Breast epithelium (tissue), 4 donors: ENCODE measurements at regions of chr2 and their contacts with region 1.

Region 1: GRCh38 chr2:105845976-105846375 is 101.3 kb downstream of the NCK2 start:
- DNase-seq: no peak
- H3K4me3 ChIP-seq: no peak overlapping the region
- H3K27ac ChIP-seq: no peak overlapping the region
- H3K4me1 ChIP-seq: no peaks in the 10 kb centered on the region
- H3K27me3 ChIP-seq: no peaks in the 10 kb centered on the region
- CTCF ChIP-seq: no peak
- POLR2A ChIP-seq: no peak

Region 2: DNA sequence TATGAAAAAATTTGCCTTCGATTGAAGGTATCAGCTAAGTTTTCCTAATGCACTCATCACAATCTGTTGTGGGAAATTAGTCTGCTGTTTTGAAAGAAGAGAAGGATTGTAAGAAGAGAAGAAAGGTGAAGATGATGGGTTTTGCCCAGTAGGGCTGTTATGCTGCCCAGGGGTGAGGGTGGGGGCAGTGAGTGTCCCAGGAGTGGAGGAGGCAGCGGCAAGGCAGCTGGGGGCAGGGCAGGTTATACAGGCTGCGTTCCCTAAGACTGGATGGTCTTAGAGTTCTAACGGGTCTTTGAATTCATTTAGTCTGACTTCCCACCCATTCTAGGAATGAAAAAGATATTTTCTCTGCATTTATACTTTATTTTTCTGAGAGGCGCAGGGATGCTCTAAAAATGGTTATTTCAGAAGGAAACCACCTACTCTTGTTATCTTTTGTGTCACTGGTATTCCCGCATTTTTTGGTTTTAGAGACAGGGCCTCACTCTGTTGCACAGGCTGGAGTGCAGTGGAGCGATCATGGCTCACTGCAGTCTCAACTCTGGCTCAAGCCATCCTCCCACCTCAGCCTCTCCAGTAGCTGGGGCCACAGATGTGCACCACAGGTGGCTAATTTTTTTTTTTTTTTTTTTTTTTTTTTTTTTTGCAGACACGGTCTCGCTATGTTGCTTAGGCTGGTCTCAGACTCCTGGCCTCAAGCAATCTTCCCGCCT is 34.5 kb after region 1 on chr2:
- intact Hi-C with region 1: loop called (anchors 2 kb)
- DNase-seq: no peak
- H3K4me3 ChIP-seq: no peak overlapping the region
- H3K27ac ChIP-seq: peak overlapping the region in 1 of 2 donors; percentile 35
- H3K4me1 ChIP-seq: no peaks in the 10 kb centered on the region
- H3K27me3 ChIP-seq: no peaks in the 10 kb centered on the region
- CTCF ChIP-seq: no peak
- POLR2A ChIP-seq: no peak